ENCODE measurements at regions of chr2 and their contacts with region 1.

Region 1: GRCh38 chr2:210195101-210195852 is 24.1 kb upstream of the KANSL1L start:
- DNase-seq: no peak
- H3K4me3 Mint-ChIP-seq: no peak overlapping the region
- H3K27ac Mint-ChIP-seq: no peak overlapping the region
- H3K4me1 Mint-ChIP-seq: peaks cover 3% of the 10 kb centered on the region
- H3K27me3 Mint-ChIP-seq: peaks cover 10% of the 10 kb centered on the region

Region 2: GRCh38 chr2:208399202-208399601 is 1796.1 kb before region 1 on chr2:
- intact Hi-C with region 1: loop called (anchors 5 kb)
- DNase-seq: no peak
- H3K4me3 Mint-ChIP-seq: no peak overlapping the region
- H3K27ac Mint-ChIP-seq: no peak overlapping the region
- H3K4me1 Mint-ChIP-seq: peaks cover 1% of the 10 kb centered on the region
- H3K27me3 Mint-ChIP-seq: peaks cover 33% of the 10 kb centered on the region

Region 3: GRCh38 chr2:209334198-209335017 is 860.9 kb before region 1 on chr2:
- intact Hi-C with region 1: loop called (anchors 10 kb)
- DNase-seq: no peak
- H3K4me3 Mint-ChIP-seq: no peak overlapping the region
- H3K27ac Mint-ChIP-seq: no peak overlapping the region
- H3K4me1 Mint-ChIP-seq: no peaks in the 10 kb centered on the region
- H3K27me3 Mint-ChIP-seq: no peaks in the 10 kb centered on the region

Region 4: DNA sequence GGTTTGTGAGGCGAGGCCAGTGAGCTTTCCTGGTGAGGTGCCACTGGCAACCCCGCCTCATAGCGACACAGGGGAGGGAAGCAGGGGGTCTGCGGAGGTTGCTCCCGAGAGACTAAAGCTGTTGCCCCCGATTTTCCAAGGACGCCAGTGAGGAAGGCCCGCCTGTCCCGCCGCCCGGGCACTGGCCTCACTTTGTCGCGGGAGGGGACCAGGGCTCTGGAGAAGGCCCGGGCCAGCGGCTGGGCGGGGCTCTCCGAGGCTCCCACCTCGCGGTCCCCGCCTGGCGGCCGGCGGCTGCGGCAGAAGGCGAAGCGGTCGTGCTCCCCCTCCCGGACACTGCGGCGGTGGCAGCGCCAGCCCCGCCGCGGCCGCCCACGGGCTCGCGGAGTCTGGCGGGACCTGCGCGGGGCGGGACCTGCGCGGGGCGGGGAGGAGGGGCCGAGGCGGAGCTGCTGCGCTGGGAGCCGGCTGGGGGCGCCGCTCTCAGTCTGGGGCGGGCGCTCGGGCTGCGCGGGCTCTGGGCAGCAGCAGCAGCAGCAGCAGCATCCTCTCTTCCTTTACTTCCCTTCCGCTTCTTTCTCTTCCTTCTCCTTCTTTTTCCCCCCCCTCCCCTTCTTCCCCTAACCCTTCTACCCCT is 771.6 kb before region 1 on chr2 and contains the start of gene MAP2:
- intact Hi-C with region 1: loop called (anchors 10 kb)
- DNase-seq: peak; percentile 65
- H3K4me3 Mint-ChIP-seq: peak within 1 kb of the TSS; percentile 73
- H3K27ac Mint-ChIP-seq: no peak within 1 kb of the TSS
- H3K4me1 Mint-ChIP-seq: peaks cover 12% of the 10 kb centered on the region
- H3K27me3 Mint-ChIP-seq: peaks cover 36% of the 10 kb centered on the region
- total RNA-seq, gene MAP2: not detected in 2 replicates

Region 5: GRCh38 chr2:209977386-209978239 is 217.7 kb before region 1 on chr2:
- intact Hi-C with region 1: loop called (anchors 1 kb)
- DNase-seq: no peak
- H3K4me3 Mint-ChIP-seq: no peak overlapping the region
- H3K27ac Mint-ChIP-seq: no peak overlapping the region
- H3K4me1 Mint-ChIP-seq: no peaks in the 10 kb centered on the region
- H3K27me3 Mint-ChIP-seq: peaks cover 8% of the 10 kb centered on the region

Region 6: DNA sequence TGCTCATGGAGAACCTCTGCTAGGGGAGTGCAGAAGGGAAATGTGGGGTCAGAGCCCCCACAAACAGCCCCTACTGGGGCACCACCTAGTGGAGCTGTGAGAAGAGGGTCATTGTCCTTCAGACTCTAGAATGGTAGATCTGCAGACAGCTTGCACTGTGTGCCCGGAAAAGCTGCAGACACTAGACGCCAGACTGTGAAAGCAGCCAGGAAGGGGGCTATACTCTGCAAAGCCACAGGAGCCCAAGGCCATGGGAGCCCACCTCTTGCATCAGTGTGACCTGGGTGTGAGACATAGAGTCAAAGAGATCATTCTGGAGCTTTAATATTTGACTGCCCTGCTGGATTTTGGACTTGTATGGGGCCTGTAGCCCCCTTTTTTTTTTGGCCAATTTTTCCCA is 132.0 kb before region 1 on chr2:
- intact Hi-C with region 1: loop called (anchors 2 kb)
- DNase-seq: no peak
- H3K4me3 Mint-ChIP-seq: no peak overlapping the region
- H3K27ac Mint-ChIP-seq: no peak overlapping the region
- H3K4me1 Mint-ChIP-seq: no peaks in the 10 kb centered on the region
- H3K27me3 Mint-ChIP-seq: no peaks in the 10 kb centered on the region

Region 7: GRCh38 chr2:210072922-210073509 is 122.3 kb before region 1 on chr2:
- intact Hi-C with region 1: loop called (anchors 1 kb)
- DNase-seq: no peak
- H3K4me3 Mint-ChIP-seq: no peak overlapping the region
- H3K27ac Mint-ChIP-seq: no peak overlapping the region
- H3K4me1 Mint-ChIP-seq: no peaks in the 10 kb centered on the region
- H3K27me3 Mint-ChIP-seq: no peaks in the 10 kb centered on the region